ENCODE measurements at regions of chr19 and their contacts with region 1.

Region 1: DNA sequence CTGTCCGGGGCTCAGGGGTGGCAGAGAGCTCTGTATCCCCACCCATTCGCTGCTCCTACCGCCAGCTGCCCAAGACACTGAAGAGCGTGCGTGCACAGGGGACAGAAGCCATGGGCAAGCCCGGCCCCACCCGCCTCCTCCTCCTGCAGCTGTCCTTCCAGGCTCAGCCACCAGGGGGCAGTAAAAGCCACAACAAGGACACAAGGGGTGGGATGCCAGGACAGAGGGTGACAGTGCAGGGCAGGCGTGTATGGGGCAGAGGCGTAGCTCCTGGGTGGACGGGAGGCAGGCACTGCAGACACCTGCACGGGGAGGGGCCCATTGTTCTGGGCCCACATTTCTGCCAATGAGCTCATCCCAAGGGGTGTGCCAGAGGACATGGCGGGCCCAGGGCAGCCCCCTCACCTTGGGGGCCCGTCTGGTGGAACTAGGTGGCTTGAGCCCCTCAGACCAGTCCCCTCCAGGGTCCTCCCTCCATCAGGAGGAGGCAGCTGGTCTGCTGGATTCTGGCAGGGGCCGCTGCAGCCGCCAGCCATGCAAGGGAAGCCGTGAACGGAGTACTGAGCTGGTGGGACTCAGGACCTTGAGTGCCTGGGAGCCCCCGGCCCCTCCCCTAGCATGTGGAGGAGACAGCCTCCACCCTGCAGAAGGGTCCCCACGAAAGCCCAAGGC is 61.1 kb downstream of the MLLT1 start:
- DNase-seq: peak; percentile 78 to 94 (median 89)
- ATAC-seq: peak; percentile 82
- H3K4me3 ChIP-seq: no peak overlapping the region
- H3K27ac ChIP-seq: peak overlapping the region in 1 of 2 donors; percentile 47
- H3K4me1 ChIP-seq: peaks cover 29 to 37% of the 10 kb centered on the region in 2 donors
- H3K27me3 ChIP-seq: no peaks in the 10 kb centered on the region
- CTCF ChIP-seq: peak; percentile 96 to 99

Region 2: GRCh38 chr19:5993648-5994358 is 224.8 kb before region 1 on chr19:
- intact Hi-C with region 1: no loop called
- DNase-seq: peak in 2 of 4 donors; percentile 79 to 89
- ATAC-seq: peak; percentile 28
- H3K4me3 ChIP-seq: no peak overlapping the region
- H3K27ac ChIP-seq: peak overlapping the region in 1 of 2 donors; percentile 1
- H3K4me1 ChIP-seq: peaks cover 4 to 17% of the 10 kb centered on the region in 2 donors
- H3K27me3 ChIP-seq: no peaks in the 10 kb centered on the region
- CTCF ChIP-seq: no peak

Region 3: DNA sequence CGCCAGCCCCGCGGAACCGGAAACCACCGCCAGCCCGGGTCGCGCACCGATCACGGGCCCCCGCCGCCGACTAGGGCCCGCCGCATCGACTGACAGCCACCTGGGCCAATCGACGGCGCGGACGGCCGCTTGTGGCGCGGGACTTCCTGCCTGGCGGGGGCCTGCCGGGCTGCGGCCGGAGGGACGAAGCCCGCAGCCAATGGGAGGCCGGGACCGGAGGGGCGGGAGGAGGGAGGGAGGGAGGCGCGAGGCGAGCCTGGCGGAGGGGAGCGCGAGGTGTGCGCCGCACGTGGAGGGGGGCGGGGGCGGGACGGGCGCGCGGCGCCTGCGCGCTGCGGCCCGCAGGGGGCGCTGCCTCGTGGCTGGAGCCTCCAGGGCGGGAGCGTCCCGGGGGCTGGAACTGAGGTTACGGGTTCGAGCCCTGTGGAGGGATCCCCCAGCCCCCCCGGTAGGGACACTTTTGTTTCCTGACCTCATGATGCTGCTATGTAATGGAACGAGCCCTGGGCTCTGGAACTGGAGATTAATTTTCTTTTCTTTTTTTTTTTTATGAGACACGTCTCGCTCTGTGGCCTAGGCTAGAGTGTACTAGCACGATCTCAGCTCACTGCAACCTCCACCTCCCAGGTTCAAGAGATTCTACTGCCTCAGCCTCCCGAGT is 61.4 kb after region 1 on chr19 and contains the start of gene MLLT1:
- intact Hi-C with region 1: loop called in 1 of 2 experiments (anchors 10 kb)
- DNase-seq: peak; percentile 92 to 99 (median 98)
- ATAC-seq: peak; percentile 99
- H3K4me3 ChIP-seq: peak within 1 kb of the TSS; percentile 50 to 88
- H3K27ac ChIP-seq: peak within 1 kb of the TSS; percentile 45 to 84
- H3K4me1 ChIP-seq: peaks cover 26 to 44% of the 10 kb centered on the region in 2 donors
- H3K27me3 ChIP-seq: no peaks in the 10 kb centered on the region
- CTCF ChIP-seq: peak; percentile 65 to 90
- polyA plus RNA-seq, gene MLLT1: 69.4 to 106 (median 89.1) TPM

Region 4: GRCh38 chr19:6297202-6297601 is 78.6 kb after region 1 on chr19:
- intact Hi-C with region 1: loop called in 1 of 2 experiments (anchors 5 kb)
- DNase-seq: no peak
- ATAC-seq: no peak
- H3K4me3 ChIP-seq: no peak overlapping the region
- H3K27ac ChIP-seq: no peak overlapping the region
- H3K4me1 ChIP-seq: no peaks in the 10 kb centered on the region
- H3K27me3 ChIP-seq: no peaks in the 10 kb centered on the region
- CTCF ChIP-seq: no peak

Region 5: DNA sequence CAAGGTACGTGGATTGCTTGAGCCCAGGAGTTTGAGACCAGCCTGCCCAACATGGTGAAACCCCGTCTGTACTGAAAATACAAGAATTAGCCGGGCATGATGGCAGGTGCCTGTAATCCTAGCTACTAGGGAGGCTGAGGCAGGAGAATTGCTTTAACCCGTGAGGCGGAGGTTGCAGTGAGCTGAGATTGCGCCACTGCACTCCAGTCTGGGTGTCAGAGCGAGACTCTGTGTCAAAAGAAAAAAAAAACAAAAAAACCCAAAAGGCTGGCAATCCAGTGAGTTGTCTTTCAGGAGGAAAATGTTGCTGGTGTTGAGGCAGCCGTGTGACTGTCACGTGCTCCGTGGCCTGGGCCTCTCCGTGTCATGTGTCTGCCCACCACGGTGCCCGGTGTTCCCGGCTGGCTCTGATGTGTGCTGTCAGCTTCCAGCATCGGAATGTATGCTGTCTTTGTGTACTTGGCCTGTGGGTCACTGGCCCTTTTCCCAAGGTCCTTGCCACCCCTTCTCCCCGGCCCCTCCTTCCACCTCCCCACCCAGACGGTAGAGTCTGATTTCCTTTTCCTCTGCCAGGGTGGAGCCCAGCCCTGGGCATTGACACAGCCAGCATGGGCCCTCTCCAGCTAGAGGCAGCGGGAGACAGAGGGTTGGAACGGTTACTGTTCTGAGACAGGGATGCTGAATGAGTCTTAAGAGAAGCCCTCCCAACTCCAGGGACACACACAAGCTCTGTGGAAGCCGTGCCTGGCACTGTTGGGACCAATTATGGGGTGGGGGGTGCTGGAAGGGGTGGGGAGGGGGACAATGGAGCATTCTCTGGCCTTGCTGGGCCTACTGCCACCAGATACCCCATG is 290.7 kb after region 1 on chr19:
- intact Hi-C with region 1: no loop called
- DNase-seq: peak in 1 of 4 donors; percentile 71
- ATAC-seq: peak; percentile 76
- H3K4me3 ChIP-seq: no peak overlapping the region
- H3K27ac ChIP-seq: peak overlapping the region in 1 of 2 donors; percentile 33
- H3K4me1 ChIP-seq: peaks cover 0 to 3% of the 10 kb centered on the region in 2 donors
- H3K27me3 ChIP-seq: peaks cover 0 to 2% of the 10 kb centered on the region in 2 donors
- CTCF ChIP-seq: no peak